AG04449 (cell line): ENCODE measurements at regions of chr14 and their contacts with region 1.

Region 1: DNA sequence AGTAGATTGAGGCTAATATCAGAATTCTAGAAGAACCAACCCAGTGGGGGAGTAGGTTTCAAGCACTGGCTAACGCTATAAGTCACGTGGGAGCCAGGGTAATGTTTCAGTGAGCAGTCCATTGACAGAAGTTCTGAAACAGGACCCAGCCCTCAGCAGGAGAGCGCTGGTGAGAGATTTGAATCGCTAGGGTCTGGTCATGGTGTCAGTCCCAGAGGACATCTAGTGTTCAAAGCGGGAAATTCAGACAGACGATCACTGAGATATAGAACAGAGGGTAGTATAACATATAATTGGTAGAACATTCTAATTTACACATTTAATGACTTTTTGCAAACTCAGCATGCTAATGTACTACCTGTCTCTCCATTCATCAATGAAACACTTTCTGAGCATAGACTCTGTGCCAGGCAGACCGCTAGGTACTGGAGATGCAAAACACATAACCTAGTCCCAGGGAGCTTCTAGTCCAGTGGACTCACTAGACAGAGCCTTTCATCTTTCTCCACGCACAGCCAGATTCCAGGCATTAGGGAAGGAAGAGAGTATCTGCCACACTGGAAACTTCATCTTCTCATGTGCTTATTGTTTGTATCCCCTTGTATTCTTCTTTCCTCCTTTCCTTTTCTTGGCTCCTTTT is 35.4 kb upstream of the RNASE3 start:
- DNase-seq: no peak
- H3K4me3 ChIP-seq: no peak overlapping the region
- CTCF ChIP-seq: peak; percentile 40

Region 2: GRCh38 chr14:20690848-20691523 is 164.8 kb before region 1 on chr14:
- CTCF ChIA-PET with region 1: interaction called, 43 read pairs
- POLR2A ChIA-PET with region 1: no interaction called
- DNase-seq: no peak
- H3K4me3 ChIP-seq: no peak overlapping the region
- CTCF ChIP-seq: peak; percentile 76

Region 3: DNA sequence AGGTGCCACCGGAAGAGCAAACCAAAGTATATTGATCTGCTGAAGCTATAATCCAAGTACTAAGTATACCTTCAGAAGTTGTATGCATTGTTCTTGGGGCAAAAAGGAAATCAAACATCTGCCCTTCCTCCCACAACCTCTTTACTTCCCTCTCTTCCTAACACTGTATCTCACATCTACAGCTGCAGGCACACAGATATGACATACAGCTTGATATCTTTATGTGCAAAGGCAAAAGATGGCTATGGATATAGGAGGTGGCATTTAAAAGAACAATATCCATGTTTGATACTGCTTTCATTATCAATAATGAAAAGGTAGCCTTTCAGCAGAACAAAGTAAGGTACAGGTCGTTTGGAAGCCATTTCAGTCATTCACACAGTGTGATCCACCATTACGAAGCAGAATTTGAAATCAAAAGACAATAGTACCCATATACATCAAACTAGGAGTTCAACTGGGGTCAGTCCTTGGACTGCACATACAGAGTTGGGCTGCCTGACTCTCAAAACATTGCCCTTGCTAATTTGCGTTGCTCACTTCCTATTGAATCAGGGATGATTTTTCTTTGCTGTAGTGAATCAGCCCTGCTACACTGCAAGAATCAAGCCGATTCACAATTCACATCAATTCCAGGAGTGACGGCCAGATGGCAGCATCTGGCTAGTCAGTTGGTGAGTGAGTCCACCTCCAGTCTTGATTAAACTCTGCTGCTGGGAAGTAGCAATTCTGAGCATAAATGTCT is 158.3 kb before region 1 on chr14:
- CTCF ChIA-PET with region 1: interaction called, 43 read pairs
- POLR2A ChIA-PET with region 1: no interaction called
- DNase-seq: no peak
- H3K4me3 ChIP-seq: no peak overlapping the region
- CTCF ChIP-seq: peak; percentile 81

Region 4: DNA sequence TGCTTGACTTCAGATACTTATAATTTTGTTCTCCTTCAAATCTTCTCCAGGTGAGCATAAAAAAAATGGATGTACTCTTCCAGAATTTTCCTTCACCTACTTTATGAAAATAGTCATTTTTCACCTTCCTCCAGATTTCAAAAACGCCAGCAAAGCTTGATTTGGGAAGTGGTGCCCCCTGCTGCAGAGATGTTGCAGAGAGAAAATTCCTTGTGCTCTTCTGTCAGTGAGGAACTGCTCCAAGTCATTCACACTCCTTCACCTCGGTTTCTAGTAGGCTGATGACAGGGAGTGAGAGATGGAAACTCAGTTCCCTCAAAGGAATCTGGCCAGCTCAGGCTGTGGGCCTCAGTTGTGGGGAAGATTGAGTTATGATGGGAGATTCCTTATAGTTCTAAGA is 11.2 kb after region 1 on chr14:
- CTCF ChIA-PET with region 1: interaction called, 35 read pairs
- POLR2A ChIA-PET with region 1: no interaction called
- DNase-seq: no peak
- H3K4me3 ChIP-seq: no peak overlapping the region
- CTCF ChIP-seq: peak; percentile 19

Region 5: DNA sequence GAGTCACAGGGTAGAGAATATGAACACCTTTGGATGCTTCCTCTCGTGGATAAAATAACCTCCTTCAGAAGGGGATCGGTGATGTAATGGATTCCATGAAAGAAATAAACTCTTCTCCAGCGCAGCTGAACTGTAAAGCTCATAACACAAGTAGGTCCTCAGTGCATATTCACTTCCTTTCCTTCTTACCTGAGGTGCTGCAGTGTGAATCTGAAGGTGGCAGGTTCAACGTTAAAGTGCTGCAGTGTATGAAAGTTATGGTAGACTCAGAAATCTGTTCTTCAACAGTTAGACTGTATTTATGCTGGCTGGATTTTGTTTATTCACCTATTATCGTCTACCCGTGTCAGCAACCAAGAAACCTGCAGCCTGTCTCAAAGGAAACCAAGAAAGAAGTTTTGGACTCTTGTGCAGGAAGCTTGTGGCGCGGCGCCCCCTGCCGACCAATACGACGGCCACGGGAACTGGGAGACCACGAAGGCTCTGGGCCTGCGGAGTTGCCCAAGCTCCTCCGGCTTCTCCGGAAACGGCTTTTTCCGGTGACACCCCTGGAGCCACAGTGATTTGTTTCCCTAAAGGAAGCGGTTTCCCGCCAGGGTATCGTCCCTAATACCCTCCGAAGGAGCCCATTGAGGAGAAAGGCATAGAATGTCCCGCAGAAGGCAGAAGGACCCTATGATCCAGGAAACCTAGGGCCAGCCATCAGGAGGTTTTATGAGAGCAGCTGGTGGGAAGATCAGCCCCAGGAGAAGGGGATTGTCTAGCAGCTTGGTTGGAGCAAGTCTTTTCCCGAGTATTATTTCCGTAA is 17.8 kb after region 1 on chr14:
- CTCF ChIA-PET with region 1: interaction called, 35 read pairs
- POLR2A ChIA-PET with region 1: no interaction called
- DNase-seq: no peak
- H3K4me3 ChIP-seq: no peak overlapping the region; the same call in 1 of the 2 replicates
- CTCF ChIP-seq: peak; percentile 79